Activated T-helper 1 cell treated with anti-CD3 and anti-CD28 coated beads, Interleukin-12 subunit alpha, Interleukin-12 subunit beta, Interleukin-2, Interleukin-4 antibody, amounts not matched to agents 30 ng/mL and 10 ng/mL and 1 ng/mL, durations not matched to agents 14 hours and 24 hours and 36 hours (primary cell): ENCODE measurements at regions of chr14 and their contacts with region 1.

Region 1: GRCh38 chr14:89936658-89937185 is 17.8 kb downstream of the EFCAB11 start:
- DNase-seq: no peak
- H3K4me3 Mint-ChIP-seq: no peak overlapping the region
- H3K27ac Mint-ChIP-seq: no peak overlapping the region
- H3K4me1 Mint-ChIP-seq: no peaks in the 10 kb centered on the region
- H3K27me3 Mint-ChIP-seq: peaks cover 2% of the 10 kb centered on the region

Region 2: GRCh38 chr14:89841855-89842254 is 94.9 kb before region 1 on chr14:
- intact Hi-C with region 1: no loop called
- DNase-seq: no peak
- H3K4me3 Mint-ChIP-seq: no peak overlapping the region
- H3K27ac Mint-ChIP-seq: no peak overlapping the region
- H3K4me1 Mint-ChIP-seq: no peaks in the 10 kb centered on the region
- H3K27me3 Mint-ChIP-seq: peaks cover 6% of the 10 kb centered on the region

Region 3: DNA sequence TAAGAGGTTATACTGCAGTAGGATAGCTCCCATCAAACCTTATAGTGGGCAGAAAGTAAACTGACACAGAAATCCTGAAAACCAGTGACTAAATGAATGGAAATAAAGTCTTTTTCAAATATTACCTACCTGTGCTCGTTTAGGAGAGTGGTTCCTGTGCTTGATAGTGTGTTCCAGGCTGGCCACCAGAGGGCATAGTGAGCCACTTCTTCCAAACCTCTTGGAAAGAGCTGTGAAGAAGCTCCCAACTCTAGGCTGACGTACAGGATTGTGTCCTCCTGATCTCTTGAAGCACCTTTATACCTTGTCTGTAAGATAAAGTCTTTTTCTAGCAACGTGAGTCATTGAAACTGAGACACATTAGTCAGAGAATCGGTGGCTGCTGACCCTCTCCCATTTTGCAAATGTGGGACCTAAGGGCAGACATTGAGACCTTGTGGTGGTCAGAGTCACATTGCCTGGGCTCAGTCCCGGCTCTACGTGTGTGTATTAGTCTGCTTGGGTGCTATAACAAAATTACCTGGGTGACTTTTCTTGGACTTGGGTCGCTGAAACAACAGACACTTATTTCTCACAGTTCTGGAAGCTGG is 36.6 kb after region 1 on chr14:
- intact Hi-C with region 1: loop called (anchors 1 kb)
- DNase-seq: peak; percentile 25
- H3K4me3 Mint-ChIP-seq: no peak overlapping the region
- H3K27ac Mint-ChIP-seq: no peak overlapping the region
- H3K4me1 Mint-ChIP-seq: peaks cover 5% of the 10 kb centered on the region
- H3K27me3 Mint-ChIP-seq: no peaks in the 10 kb centered on the region

Region 4: DNA sequence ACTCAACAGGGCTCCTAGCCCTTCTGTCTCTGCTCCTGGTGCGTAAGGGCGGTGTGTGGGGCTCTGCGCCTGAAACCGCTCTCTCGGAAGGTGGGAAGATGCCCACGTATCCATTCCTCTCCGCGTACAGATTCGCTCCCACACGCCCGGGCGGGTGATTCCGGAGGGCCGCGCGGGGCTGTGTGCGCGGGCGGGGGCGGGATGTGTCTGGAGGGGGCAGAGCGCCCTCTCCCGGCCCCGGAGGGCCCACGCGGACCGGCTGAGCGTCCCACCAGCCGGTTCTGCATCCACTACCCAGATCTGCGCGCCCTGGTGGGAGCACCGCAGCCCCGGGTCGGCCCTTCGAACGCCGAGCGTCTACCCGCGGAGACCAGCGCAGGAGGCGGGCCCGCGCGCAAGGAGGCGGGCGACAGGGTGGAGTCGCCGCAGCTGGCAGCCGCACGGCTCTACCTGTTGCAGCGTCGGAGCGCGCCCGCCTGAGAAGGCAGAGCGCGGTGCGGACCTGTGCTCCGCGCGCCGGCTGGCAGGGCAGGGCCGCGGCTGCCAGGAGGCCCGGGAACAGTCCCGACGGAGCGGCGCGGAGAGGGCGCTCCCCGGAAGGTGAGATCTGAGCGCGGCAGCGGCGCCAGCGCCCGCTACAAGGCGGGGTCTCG is 123.7 kb after region 1 on chr14:
- intact Hi-C with region 1: loop called (anchors 1 kb)
- DNase-seq: peak; percentile 51
- H3K4me3 Mint-ChIP-seq: peak overlapping the region; percentile 73
- H3K27ac Mint-ChIP-seq: no peak overlapping the region
- H3K4me1 Mint-ChIP-seq: peaks cover 30% of the 10 kb centered on the region
- H3K27me3 Mint-ChIP-seq: peaks cover 71% of the 10 kb centered on the region

Region 5: GRCh38 chr14:90235179-90235976 is 298.7 kb after region 1 on chr14:
- intact Hi-C with region 1: loop called (anchors 1 kb)
- DNase-seq: peak; percentile 59
- H3K4me3 Mint-ChIP-seq: no peak overlapping the region
- H3K27ac Mint-ChIP-seq: no peak overlapping the region
- H3K4me1 Mint-ChIP-seq: no peaks in the 10 kb centered on the region
- H3K27me3 Mint-ChIP-seq: peaks cover 5% of the 10 kb centered on the region